ENCODE measurements at regions of chrX and their contacts with region 1.

Region 1: DNA sequence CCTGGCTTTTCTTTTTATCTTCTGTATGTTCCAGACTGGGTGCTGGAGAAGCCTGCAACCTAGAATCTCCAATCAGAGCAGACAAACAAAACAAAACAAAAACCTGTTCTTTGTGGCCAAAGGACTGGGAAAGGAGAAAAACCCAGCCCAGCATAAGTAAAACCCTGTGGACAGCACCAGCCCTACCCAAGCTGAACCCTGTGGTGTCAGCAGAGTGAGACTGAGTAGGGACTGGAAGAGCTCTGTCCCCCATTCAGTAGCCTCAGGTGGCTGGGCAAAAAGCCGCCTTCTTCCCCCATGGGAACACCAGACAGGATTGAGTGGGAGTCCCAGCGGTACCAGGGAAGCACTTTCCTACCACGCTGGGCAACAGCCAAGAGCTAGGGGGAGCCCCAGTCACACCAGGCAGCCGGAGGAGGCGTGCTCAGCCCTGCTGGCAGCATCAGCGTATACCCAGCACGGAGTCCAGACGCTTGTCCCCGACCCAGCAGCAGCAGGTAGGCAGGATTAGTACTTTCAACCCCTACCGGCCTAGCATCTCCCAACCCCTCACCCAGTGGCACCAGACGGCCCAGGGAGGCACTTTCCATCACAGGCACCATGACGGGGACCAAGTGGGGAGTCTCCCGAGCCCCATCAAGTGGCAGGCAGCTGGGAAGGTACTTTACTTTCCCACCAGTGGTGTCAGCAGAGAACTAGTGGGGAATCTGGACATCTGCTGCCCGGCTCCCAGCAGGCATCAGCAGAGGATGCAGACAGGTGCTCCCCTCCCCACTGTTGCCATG is 8.6 kb upstream of the JADE3 start:
- DNase-seq: peak; percentile 89

Region 2: GRCh38 chrX:46953597-46953996 is 49.9 kb after region 1 on chrX:
- intact Hi-C with region 1: no loop called
- DNase-seq: no peak

Region 3: GRCh38 chrX:47030339-47030738 is 126.7 kb after region 1 on chrX:
- intact Hi-C with region 1: loop called in 1 of 2 experiments (anchors 10 kb)
- DNase-seq: no peak

Region 4: GRCh38 chrX:47047989-47048388 is 144.3 kb after region 1 on chrX:
- intact Hi-C with region 1: no loop called
- DNase-seq: no peak

Measured in posterior vena cava (tissue), 2 donors.